ENCODE measurements at regions of chr2 and their contacts with region 1.

Region 1: GRCh38 chr2:241110607-241111439 is 8.7 kb upstream of the MTERF4 start:
- DNase-seq: peak in 4 of 9 experiments; percentile 41 to 73 (median 56)
- ATAC-seq: peak; percentile 33
- H3K4me3 ChIP-seq: peak overlapping the region; percentile 58 to 67
- H3K4me3 Mint-ChIP-seq: peak overlapping the region; percentile 97
- H3K27ac ChIP-seq: peak overlapping the region; percentile 63 to 94
- H3K27ac Mint-ChIP-seq: peak overlapping the region; percentile 98
- H3K4me1 ChIP-seq: peaks cover 61% of the 10 kb centered on the region
- H3K4me1 Mint-ChIP-seq: peaks cover 65% of the 10 kb centered on the region
- H3K27me3 ChIP-seq: no peaks in the 10 kb centered on the region
- H3K27me3 Mint-ChIP-seq: no peaks in the 10 kb centered on the region
- CTCF ChIP-seq: no peak

Region 2: DNA sequence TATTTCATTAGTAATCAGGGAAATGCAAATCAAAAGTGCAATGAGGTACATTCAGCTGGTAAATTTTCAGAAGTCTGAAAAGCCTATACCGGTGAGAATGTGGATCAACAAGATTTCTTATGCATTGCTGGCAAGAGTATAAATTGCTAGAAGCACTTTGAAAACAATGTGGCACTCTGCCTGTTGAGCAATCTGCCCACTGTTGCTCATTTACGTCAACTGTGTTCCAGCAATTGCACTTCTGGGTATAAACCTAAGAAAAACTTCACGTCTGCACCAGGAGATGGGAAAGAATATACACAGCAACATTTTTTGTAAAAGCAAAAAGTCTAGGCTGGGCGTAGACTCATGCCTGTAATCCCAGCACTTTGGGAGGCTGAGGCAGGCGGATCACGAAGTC is 49.5 kb before region 1 on chr2:
- CTCF ChIA-PET with region 1: no interaction called
- POLR2A ChIA-PET with region 1: no interaction called
- intact Hi-C with region 1: no loop called
- DNase-seq: no peak
- ATAC-seq: no peak
- H3K4me3 ChIP-seq: no peak overlapping the region
- H3K4me3 Mint-ChIP-seq: no peak overlapping the region
- H3K27ac ChIP-seq: no peak overlapping the region
- H3K27ac Mint-ChIP-seq: no peak overlapping the region
- H3K4me1 ChIP-seq: peaks cover 10% of the 10 kb centered on the region
- H3K4me1 Mint-ChIP-seq: peaks cover 8% of the 10 kb centered on the region
- H3K27me3 ChIP-seq: no peaks in the 10 kb centered on the region
- H3K27me3 Mint-ChIP-seq: no peaks in the 10 kb centered on the region
- CTCF ChIP-seq: no peak

Region 3: DNA sequence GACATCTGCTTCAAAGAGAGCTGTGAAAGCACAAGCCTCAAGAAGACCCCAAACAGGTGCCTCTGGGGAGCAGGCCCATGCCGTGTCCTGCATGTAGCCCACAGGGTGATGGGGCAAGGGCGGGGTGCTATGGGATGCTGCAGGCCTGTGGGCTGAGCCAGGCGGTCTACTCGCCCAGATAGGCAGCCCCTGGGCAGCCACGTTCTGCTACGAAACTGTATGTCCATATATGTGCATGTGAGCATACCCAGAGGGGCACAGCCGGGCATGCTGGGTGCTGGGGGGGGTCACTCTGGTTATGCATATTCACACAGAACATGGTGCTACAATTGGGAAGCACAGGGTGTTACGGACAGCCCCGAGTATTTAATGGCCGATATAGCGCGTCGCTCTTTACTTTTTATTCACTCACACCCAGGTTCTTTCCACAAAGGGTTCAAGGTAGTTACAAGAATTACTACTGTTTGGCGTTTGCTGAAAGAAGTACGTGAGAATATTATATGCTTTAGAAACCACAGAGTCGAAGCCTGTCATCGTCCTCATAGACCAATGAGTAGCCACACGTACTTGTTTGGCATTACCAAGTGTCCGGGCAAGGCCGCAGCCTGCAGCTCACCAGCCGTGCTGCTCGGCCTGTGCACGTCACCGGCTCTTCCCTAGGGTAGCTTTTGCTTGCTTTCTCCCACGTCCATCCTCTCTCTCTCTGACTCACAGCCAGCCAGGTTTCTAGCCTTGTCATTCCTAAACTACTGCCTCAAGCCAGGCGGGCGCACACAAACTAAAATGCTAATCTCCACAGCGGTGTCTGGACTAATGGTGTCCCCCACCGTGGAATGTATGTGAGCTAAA is 23.2 kb before region 1 on chr2:
- CTCF ChIA-PET with region 1: interaction called, 4 read pairs
- POLR2A ChIA-PET with region 1: interaction called, 139 read pairs
- intact Hi-C with region 1: no loop called
- DNase-seq: no peak
- ATAC-seq: no peak
- H3K4me3 ChIP-seq: no peak overlapping the region
- H3K4me3 Mint-ChIP-seq: no peak overlapping the region
- H3K27ac ChIP-seq: no peak overlapping the region
- H3K27ac Mint-ChIP-seq: peak overlapping the region; percentile 83
- H3K4me1 ChIP-seq: peaks cover 14% of the 10 kb centered on the region
- H3K4me1 Mint-ChIP-seq: peaks cover 40% of the 10 kb centered on the region
- H3K27me3 ChIP-seq: no peaks in the 10 kb centered on the region
- H3K27me3 Mint-ChIP-seq: no peaks in the 10 kb centered on the region
- CTCF ChIP-seq: no peak

Region 4: DNA sequence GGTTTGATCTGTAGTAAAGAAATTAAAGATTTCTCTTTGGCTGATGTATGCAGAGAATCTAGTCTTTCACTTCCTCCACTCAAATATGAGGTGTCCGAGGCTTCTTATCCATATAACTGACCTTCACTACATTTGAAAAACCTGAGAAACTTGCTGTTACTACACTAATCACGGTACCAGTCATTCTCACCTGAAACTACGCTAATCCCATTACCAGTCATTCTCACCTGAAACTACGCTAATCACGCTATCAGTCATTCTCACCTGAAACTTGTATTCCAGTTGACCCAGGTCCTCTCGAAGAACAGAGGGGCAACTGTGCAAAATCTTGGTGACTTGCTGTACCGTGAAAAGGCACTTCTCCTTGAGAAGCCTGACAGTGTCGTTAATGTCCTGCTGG is 13.8 kb before region 1 on chr2:
- CTCF ChIA-PET with region 1: interaction called, 12 read pairs
- POLR2A ChIA-PET with region 1: interaction called, 139 read pairs
- intact Hi-C with region 1: loop called (anchors 1 kb)
- DNase-seq: no peak
- ATAC-seq: no peak
- H3K4me3 ChIP-seq: no peak overlapping the region
- H3K4me3 Mint-ChIP-seq: no peak overlapping the region
- H3K27ac ChIP-seq: peak overlapping the region in 1 of 2 experiments; percentile 79
- H3K27ac Mint-ChIP-seq: peak overlapping the region; percentile 95
- H3K4me1 ChIP-seq: peaks cover 71% of the 10 kb centered on the region
- H3K4me1 Mint-ChIP-seq: peaks cover 82% of the 10 kb centered on the region
- H3K27me3 ChIP-seq: no peaks in the 10 kb centered on the region
- H3K27me3 Mint-ChIP-seq: no peaks in the 10 kb centered on the region
- CTCF ChIP-seq: no peak